ENCODE measurements at regions of chr3 and their contacts with region 1.

Region 1: GRCh38 chr3:124014366-124014942 is 22.5 kb upstream of the ROPN1 start:
- DNase-seq: no peak
- H3K4me3 ChIP-seq: no peak overlapping the region
- H3K27ac ChIP-seq: no peak overlapping the region
- H3K4me1 ChIP-seq: no peaks in the 10 kb centered on the region
- H3K27me3 ChIP-seq: no peaks in the 10 kb centered on the region
- CTCF ChIP-seq: no peak
- EP300 ChIP-seq: no peak
- POLR2A ChIP-seq: no peak

Region 2: GRCh38 chr3:124078953-124079911 is 64.8 kb after region 1 on chr3:
- in situ Hi-C with region 1: loop called in 2 of 4 experiments (anchors 5 kb)
- intact Hi-C with region 1: loop called (anchors 5 kb)
- DNase-seq: no peak
- H3K4me3 ChIP-seq: no peak overlapping the region
- H3K27ac ChIP-seq: no peak overlapping the region
- H3K4me1 ChIP-seq: no peaks in the 10 kb centered on the region
- H3K27me3 ChIP-seq: no peaks in the 10 kb centered on the region
- CTCF ChIP-seq: peak; percentile 65 to 82 (median 77)
- EP300 ChIP-seq: no peak
- POLR2A ChIP-seq: no peak

Region 3: DNA sequence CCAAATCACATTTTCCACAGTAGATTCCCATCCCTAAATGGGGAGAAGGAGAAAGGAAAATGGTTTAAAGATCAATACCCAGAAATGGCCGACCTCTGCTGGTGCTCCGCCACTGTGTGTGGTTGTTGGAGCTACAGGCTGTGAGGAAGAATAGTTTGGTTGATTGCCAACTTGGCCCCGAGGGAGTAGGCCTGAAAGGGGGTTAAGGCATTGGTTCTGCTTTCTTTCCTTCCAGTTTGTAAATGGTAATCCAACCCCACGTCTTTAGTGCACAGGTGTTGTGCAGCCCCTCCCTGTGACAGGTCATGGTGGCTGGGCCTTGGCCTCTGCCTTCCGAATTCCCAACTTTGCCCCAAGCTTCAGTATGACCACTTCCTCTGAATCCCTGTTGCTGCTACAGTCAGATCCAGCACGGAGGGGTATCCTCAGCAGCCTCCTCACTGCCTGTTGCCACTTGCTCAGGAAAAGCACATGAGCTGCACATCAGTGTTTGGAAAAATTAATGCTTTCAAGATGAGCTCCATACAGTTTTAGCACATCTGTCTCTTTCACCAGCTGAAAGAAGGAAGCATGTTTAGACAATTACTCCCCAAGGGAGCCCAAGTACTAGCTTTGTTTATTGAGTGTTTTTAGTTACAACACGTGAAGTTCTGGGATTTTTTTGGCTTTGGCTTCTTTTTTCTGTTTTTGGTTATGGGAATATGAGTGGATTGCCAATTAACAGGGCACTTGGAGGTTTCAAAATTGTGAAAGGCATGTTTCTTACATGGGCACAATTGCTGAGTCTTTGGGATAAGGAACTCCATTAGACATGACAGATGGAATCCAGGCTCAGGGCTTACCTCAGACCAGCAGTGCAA is 69.8 kb after region 1 on chr3:
- in situ Hi-C with region 1: loop called in 2 of 4 experiments (anchors 5 kb)
- intact Hi-C with region 1: loop called (anchors 5 kb)
- DNase-seq: no peak
- H3K4me3 ChIP-seq: no peak overlapping the region
- H3K27ac ChIP-seq: no peak overlapping the region
- H3K4me1 ChIP-seq: no peaks in the 10 kb centered on the region
- H3K27me3 ChIP-seq: no peaks in the 10 kb centered on the region
- CTCF ChIP-seq: no peak
- EP300 ChIP-seq: no peak
- POLR2A ChIP-seq: no peak

Region 4: GRCh38 chr3:124281453-124282316 is 267.2 kb after region 1 on chr3:
- in situ Hi-C with region 1: loop called in 1 of 4 experiments (anchors 25 kb)
- intact Hi-C with region 1: loop called (anchors 5 kb)
- DNase-seq: peak; percentile 25
- H3K4me3 ChIP-seq: no peak overlapping the region
- H3K27ac ChIP-seq: no peak overlapping the region
- H3K4me1 ChIP-seq: peaks cover 0 to 17% (median 7%) of the 10 kb centered on the region in 4 donors
- H3K27me3 ChIP-seq: no peaks in the 10 kb centered on the region
- CTCF ChIP-seq: peak; percentile 36 to 52 (median 43)
- EP300 ChIP-seq: no peak
- POLR2A ChIP-seq: no peak

Region 5: GRCh38 chr3:124467980-124468902 is 453.8 kb after region 1 on chr3:
- in situ Hi-C with region 1: loop called in 1 of 4 experiments (anchors 10 kb)
- intact Hi-C with region 1: loop called (anchors 10 kb)
- DNase-seq: peak; percentile 41
- H3K4me3 ChIP-seq: no peak overlapping the region
- H3K27ac ChIP-seq: no peak overlapping the region
- H3K4me1 ChIP-seq: peaks cover 0 to 2% (median 0%) of the 10 kb centered on the region in 4 donors
- H3K27me3 ChIP-seq: no peaks in the 10 kb centered on the region
- CTCF ChIP-seq: peak; percentile 89 to 94 (median 93)
- EP300 ChIP-seq: no peak
- POLR2A ChIP-seq: no peak

Measured in transverse colon (tissue), 4 donors.